Posterior vena cava (tissue), 2 donors: ENCODE measurements at regions of chr7 and their contacts with region 1.

Region 1: GRCh38 chr7:24922099-24922773 is 57.7 kb downstream of the OSBPL3 start:
- DNase-seq: no peak

Region 2: GRCh38 chr7:23438170-23438569 is 1484.1 kb before region 1 on chr7:
- intact Hi-C with region 1: loop called in 1 of 2 experiments (anchors 5 kb)
- DNase-seq: no peak

Region 3: GRCh38 chr7:25557379-25557917 is 635.2 kb after region 1 on chr7:
- intact Hi-C with region 1: no loop called
- DNase-seq: no peak